Ascending aorta (tissue), 2 donors: ENCODE measurements at regions of chr11 and their contacts with region 1.

Region 1: GRCh38 chr11:34339149-34340064 is 18.4 kb downstream of the ABTB2 start:
- DNase-seq: no peak
- H3K4me3 ChIP-seq: no peak overlapping the region
- H3K27ac ChIP-seq: no peak overlapping the region
- H3K4me1 ChIP-seq: peaks cover 5 to 28% of the 10 kb centered on the region in 2 donors
- H3K27me3 ChIP-seq: no peaks in the 10 kb centered on the region
- CTCF ChIP-seq: no peak

Region 2: DNA sequence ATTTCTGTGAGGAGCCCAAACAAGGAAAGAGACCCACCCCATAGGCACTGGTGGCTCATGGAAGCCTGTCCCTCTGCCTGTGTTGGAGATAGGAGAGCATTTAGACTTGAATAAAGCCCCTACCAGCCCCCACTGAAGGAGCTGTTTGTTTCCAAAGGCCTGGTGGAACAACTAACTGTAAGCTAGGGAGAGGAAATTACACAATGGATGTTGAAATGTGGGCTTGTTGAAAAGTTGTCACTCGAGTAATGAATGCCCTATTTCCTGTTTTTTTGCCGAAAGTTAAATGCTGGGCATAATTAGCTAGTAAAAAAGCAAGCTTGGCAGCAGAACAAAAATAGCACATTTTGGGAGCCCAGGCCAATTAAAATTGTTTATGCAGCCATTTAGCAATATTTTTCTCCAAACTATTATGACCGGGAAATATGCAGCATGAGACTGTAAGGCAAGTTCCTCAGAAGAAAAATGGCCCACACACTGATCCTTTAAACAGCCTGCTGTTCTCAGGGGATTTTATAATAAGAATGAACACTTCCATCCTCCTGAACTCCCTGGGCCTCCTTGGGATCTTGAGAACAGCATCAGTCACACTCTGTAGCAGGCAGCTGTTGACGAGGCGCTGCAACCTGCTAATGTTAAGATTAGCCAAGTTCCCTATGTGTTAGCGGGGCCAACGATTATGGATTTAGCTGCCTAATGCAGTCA is 408.9 kb before region 1 on chr11:
- intact Hi-C with region 1: loop called (anchors 5 kb)
- DNase-seq: peak in 1 of 2 donors; percentile 76
- H3K4me3 ChIP-seq: no peak overlapping the region
- H3K27ac ChIP-seq: peak overlapping the region; percentile 65 to 70
- H3K4me1 ChIP-seq: peaks cover 4 to 32% of the 10 kb centered on the region in 2 donors
- H3K27me3 ChIP-seq: no peaks in the 10 kb centered on the region
- CTCF ChIP-seq: no peak

Region 3: DNA sequence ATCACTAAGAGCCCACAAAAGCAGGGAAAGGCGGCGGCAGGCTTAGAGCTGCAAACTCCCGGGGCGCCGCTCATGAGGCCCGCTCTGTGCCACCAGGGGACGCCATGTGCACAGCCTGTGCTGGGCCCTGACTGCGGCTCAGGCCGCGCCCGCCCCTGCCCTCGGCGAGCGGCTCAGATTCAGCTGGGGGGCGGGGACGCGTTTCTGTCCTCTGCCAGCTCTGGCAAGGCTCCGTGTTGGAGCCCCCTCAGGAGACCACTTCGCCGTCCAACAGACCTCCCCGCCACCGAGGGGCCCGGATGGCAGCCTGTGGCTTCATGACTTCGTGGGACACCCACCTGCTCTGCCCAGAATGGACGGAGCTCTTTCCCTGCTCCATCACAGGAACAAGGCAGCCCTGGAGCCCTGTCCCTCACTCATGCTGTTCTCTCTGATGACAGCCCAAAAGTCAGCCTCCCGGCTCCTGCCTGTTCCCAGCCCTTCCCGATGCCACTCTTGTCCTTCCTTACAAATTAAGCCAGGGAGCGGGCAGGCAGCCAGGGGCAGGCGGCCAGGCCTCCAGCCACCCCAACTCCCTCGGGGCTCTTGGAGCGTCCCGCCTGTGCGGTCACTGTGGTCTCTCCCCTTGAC is 164.9 kb before region 1 on chr11:
- intact Hi-C with region 1: no loop called
- DNase-seq: peak in 1 of 2 donors; percentile 89
- H3K4me3 ChIP-seq: peak overlapping the region; percentile 47 to 58
- H3K27ac ChIP-seq: peak overlapping the region; percentile 13 to 31
- H3K4me1 ChIP-seq: peaks cover 5 to 7% of the 10 kb centered on the region in 2 donors
- H3K27me3 ChIP-seq: no peaks in the 10 kb centered on the region
- CTCF ChIP-seq: peak; percentile 95 to 99 (median 99)